ENCODE measurements at regions of chrX and their contacts with region 1.

Region 1: GRCh38 chrX:43654431-43655150 is 1.5 kb upstream of the MAOA start:
- DNase-seq: peak; percentile 77 to 90 (median 85)
- ATAC-seq: peak; percentile 97
- H3K4me3 ChIP-seq: peak overlapping the region; percentile 71
- H3K4me3 Mint-ChIP-seq: peak overlapping the region; percentile 84 to 93 (median 90)
- H3K27ac ChIP-seq: peak overlapping the region; percentile 71
- H3K27ac Mint-ChIP-seq: peak overlapping the region; percentile 88 to 100 (median 98)
- H3K4me1 ChIP-seq: no peaks in the 10 kb centered on the region
- H3K4me1 Mint-ChIP-seq: peaks cover 0 to 10% (median 6%) of the 10 kb centered on the region in 7 donors
- H3K27me3 ChIP-seq: no peaks in the 10 kb centered on the region
- H3K27me3 Mint-ChIP-seq: peaks cover 0 to 21% (median 0%) of the 10 kb centered on the region in 5 donors

Region 2: DNA sequence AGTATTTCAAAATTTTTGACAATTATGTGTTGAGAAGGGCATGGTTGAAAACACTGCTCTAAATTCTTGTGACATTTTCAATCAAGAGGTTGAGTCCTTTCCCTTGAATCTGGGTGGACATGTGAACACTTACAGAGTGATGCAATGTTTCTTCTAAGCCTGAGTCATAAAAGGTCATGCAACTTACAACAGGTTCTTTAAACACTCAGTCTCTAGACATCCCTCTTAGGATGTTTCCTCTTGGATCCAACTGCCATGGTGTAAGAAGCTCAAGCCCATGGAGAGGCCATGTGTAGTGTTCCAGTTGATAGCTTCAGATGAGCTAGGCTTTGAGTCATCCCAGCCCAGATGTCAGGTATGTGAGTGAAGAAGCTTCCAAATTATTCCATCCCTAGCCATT is 230.7 kb before region 1 on chrX:
- CTCF ChIA-PET with region 1: no interaction called
- POLR2A ChIA-PET with region 1: no interaction called
- intact Hi-C with region 1: no loop called
- DNase-seq: no peak
- ATAC-seq: no peak
- H3K4me3 ChIP-seq: no peak overlapping the region
- H3K4me3 Mint-ChIP-seq: no peak overlapping the region
- H3K27ac ChIP-seq: no peak overlapping the region
- H3K27ac Mint-ChIP-seq: no peak overlapping the region
- H3K4me1 ChIP-seq: no peaks in the 10 kb centered on the region
- H3K4me1 Mint-ChIP-seq: no peaks in the 10 kb centered on the region
- H3K27me3 ChIP-seq: no peaks in the 10 kb centered on the region
- H3K27me3 Mint-ChIP-seq: peaks cover 0 to 8% (median 0%) of the 10 kb centered on the region in 5 donors

Region 3: GRCh38 chrX:43627147-43628068 is 27.2 kb before region 1 on chrX:
- CTCF ChIA-PET with region 1: no interaction called
- POLR2A ChIA-PET with region 1: no interaction called
- intact Hi-C with region 1: no loop called
- DNase-seq: no peak
- ATAC-seq: no peak
- H3K4me3 ChIP-seq: no peak overlapping the region
- H3K4me3 Mint-ChIP-seq: no peak overlapping the region
- H3K27ac ChIP-seq: no peak overlapping the region
- H3K27ac Mint-ChIP-seq: no peak overlapping the region
- H3K4me1 ChIP-seq: no peaks in the 10 kb centered on the region
- H3K4me1 Mint-ChIP-seq: no peaks in the 10 kb centered on the region
- H3K27me3 ChIP-seq: no peaks in the 10 kb centered on the region
- H3K27me3 Mint-ChIP-seq: peaks cover 0 to 3% (median 0%) of the 10 kb centered on the region in 5 donors

Region 4: DNA sequence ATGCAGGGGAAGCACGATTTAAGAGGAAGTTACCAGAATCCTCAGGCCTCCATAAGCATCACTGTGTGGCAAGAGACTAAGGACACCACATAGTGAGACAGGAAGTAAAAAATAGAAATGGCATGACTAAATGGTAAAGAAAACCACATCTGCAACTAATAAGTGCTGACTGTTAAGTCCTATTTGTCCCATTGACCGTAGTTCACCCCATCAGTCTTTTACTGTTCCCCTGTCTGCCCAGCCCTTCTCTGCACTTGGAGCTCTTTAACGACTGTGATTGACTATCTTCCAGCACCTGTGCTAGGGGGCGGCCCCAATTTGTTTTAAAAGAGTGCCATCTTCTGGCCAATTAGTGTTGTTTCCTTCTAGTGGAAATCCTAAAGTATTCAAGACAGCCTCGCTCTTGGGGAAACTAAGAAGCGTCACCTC is 95.7 kb after region 1 on chrX:
- CTCF ChIA-PET with region 1: no interaction called
- POLR2A ChIA-PET with region 1: no interaction called
- intact Hi-C with region 1: loop called in 1 of 2 experiments (anchors 1 kb)
- DNase-seq: peak in 8 of 9 donors; percentile 18 to 65 (median 40)
- ATAC-seq: peak; percentile 72
- H3K4me3 ChIP-seq: no peak overlapping the region
- H3K4me3 Mint-ChIP-seq: no peak overlapping the region
- H3K27ac ChIP-seq: no peak overlapping the region
- H3K27ac Mint-ChIP-seq: no peak overlapping the region
- H3K4me1 ChIP-seq: no peaks in the 10 kb centered on the region
- H3K4me1 Mint-ChIP-seq: peaks cover 0 to 7% (median 0%) of the 10 kb centered on the region in 7 donors
- H3K27me3 ChIP-seq: no peaks in the 10 kb centered on the region
- H3K27me3 Mint-ChIP-seq: no peaks in the 10 kb centered on the region

Region 5: DNA sequence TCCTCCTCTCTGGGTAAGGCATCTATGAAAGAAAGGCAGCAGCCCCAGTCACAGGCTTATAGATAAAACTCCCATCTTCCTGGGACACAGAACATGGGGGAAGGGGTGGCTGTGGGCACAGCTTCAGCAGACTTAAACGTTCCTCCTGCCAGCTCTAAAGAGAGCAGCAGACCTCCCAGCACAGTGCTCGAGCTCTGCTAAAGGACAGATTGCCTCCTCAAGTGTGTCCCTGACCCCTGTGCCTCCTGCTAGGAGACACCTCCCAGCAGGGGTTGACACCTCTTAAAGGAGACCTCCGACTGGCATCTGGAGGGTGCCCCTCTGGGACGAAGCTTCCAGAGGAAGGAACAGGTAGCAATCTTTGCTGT is 599.0 kb after region 1 on chrX:
- CTCF ChIA-PET with region 1: no interaction called
- POLR2A ChIA-PET with region 1: no interaction called
- intact Hi-C with region 1: loop called in 1 of 2 experiments (anchors 10 kb)
- DNase-seq: no peak
- ATAC-seq: no peak
- H3K4me3 ChIP-seq: peak overlapping the region; percentile 14
- H3K4me3 Mint-ChIP-seq: peak overlapping the region; percentile 59 to 84 (median 72)
- H3K27ac ChIP-seq: peak overlapping the region; percentile 56
- H3K27ac Mint-ChIP-seq: peak overlapping the region; percentile 80 to 97 (median 91)
- H3K4me1 ChIP-seq: peaks cover 7 to 12% of the 10 kb centered on the region in 2 donors
- H3K4me1 Mint-ChIP-seq: peaks cover 15 to 64% (median 33%) of the 10 kb centered on the region in 7 donors
- H3K27me3 ChIP-seq: no peaks in the 10 kb centered on the region
- H3K27me3 Mint-ChIP-seq: no peaks in the 10 kb centered on the region